ENCODE measurements at regions of chr18 and their contacts with region 1.

Region 1: DNA sequence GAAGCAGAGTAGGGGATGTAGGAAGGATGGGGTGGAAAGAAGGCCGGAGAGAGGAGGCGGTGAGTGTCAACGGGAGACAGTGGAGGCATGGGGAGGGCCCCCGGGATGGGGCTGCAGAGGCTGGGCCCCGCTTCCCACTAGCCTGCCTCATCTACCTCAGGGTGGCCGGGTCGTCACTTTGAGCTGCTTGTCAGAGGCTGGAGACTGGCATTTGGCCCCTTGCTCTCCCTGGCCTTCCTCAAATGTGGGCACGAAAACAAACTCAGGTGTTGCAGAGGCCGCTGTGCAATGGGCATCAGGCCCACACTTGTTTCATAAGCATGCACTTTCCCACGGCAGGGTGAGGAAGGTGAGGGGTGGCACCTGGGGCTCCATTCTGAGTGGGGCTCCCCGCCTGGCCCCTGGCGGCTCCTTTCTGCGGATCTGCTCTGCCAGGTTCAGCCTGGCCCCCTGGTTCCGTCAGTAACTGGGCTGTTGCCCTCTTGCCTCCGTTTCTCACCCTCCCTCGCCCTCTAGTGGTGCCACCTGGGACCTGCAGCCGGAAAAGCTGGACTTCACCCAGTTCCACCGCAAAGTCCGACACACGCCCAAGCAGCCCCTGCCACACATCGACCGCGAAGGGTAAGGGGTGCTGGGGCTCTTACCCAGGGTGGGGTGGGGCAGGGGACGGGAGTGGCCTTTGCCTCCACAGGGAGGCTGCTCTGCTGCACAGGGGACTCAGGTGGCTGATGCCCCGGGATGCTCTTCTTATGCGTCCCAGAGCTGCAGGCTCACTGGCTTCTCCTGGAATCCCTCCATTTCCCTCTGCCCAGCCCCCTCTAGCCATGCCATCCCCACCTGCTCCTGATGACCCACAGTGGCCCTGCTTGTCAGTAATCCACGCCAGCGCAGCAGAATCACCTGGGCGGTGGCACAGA is 125.4 kb downstream of the CTIF start:
- DNase-seq: peak; percentile 80 to 93
- ATAC-seq: peak; percentile 78
- H3K4me3 ChIP-seq: no peak overlapping the region
- H3K27ac ChIP-seq: no peak overlapping the region
- H3K4me1 ChIP-seq: no peaks in the 10 kb centered on the region
- H3K27me3 ChIP-seq: no peaks in the 10 kb centered on the region

Region 2: DNA sequence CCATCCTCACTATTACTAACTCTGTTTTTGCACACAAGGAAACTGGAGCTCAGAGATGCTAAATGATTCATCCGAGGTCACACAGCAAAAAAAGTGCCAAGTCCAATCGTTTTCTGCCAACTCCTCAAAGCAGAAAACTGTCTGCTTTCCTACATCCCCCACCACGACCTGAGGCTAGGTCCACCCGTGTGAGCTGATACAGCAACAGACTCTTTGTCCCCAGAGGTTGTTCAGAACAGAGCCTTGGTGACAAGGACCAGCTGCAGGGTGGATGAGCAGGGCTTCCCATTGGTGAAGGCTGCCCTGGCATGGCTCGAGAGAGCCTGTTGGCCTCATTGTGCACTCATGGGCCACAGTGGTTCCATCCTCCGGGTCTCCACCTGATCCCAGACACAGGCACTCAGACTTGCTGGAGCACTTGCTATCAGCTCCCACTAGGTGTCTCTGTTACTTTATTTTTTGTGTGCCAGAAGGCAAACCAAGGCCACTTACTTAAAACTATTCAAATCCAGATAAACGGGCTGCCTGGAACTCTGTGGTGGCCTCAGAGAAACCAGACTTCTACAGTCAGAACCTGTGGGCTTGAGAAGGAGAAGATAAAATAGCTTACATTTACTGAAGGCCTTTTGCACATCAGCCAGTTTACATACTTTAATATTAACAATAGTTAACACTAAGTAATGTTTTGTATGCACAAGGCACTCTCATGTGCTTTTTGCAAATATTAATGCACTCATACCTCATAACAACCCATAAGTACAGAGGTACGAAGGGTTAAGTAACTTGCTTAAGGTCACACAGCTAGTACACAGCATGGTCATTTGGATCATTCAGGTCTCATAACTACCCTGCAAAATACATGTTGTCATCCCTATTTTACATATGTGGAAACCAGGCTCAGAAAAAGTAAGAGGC is 188.3 kb before region 1 on chr18:
- intact Hi-C with region 1: loop called (anchors 1 kb)
- DNase-seq: peak in 1 of 2 donors; percentile 52
- ATAC-seq: peak; percentile 89
- H3K4me3 ChIP-seq: no peak overlapping the region
- H3K27ac ChIP-seq: no peak overlapping the region
- H3K4me1 ChIP-seq: no peaks in the 10 kb centered on the region
- H3K27me3 ChIP-seq: peaks cover 0 to 3% of the 10 kb centered on the region in 2 donors

Region 3: GRCh38 chr18:48806551-48807261 is 142.5 kb after region 1 on chr18:
- intact Hi-C with region 1: no loop called
- DNase-seq: peak; percentile 65 to 78
- ATAC-seq: peak; percentile 78
- H3K4me3 ChIP-seq: no peak overlapping the region
- H3K27ac ChIP-seq: peak overlapping the region; percentile 61 to 97
- H3K4me1 ChIP-seq: peaks cover 0 to 2% of the 10 kb centered on the region in 2 donors
- H3K27me3 ChIP-seq: no peaks in the 10 kb centered on the region

Measured in aorta (tissue), 5 donors.